ENCODE measurements at regions of chr7 and their contacts with region 1.

Region 1: GRCh38 chr7:100889761-100890634 is 483 bp upstream of the UFSP1 start:
- DNase-seq: peak; percentile 96 to 100 (median 97)
- ATAC-seq: peak; percentile 88
- H3K4me3 ChIP-seq: peak overlapping the region; percentile 54
- H3K27ac ChIP-seq: peak overlapping the region; percentile 77
- H3K4me1 ChIP-seq: peaks cover 33 to 91% of the 10 kb centered on the region in 2 experiments
- H3K27me3 ChIP-seq: no peaks in the 10 kb centered on the region
- CTCF ChIP-seq: no peak
- EP300 ChIP-seq: no peak
- POLR2A ChIP-seq: peak; percentile 89
- RAD21 ChIP-seq: no peak

Region 2: GRCh38 chr7:100874577-100875355 is 15.2 kb before region 1 on chr7 and contains the start of gene SRRT:
- CTCF ChIA-PET with region 1: no interaction called
- POLR2A ChIA-PET with region 1: interaction called, 144 read pairs
- in situ Hi-C with region 1: no loop called
- intact Hi-C with region 1: no loop called
- DNase-seq: peak; percentile 96 to 100 (median 98)
- ATAC-seq: peak; percentile 97
- H3K4me3 ChIP-seq: peak within 1 kb of the TSS; percentile 100
- H3K27ac ChIP-seq: peak within 1 kb of the TSS; percentile 96
- H3K4me1 ChIP-seq: peaks cover 20 to 48% of the 10 kb centered on the region in 2 experiments; a peak in 4 of 5 replicates
- H3K27me3 ChIP-seq: no peaks in the 10 kb centered on the region
- CTCF ChIP-seq: peak; percentile 37 to 41 (median 41); a peak in 4 of 6 replicates
- EP300 ChIP-seq: peak; percentile 56
- POLR2A ChIP-seq: peak; percentile 98
- RAD21 ChIP-seq: 0 out of 4 replicates have a peak, but pooled peaks of 1 of the 2 experiments have one; percentile 3
- polyA plus RNA-seq, gene SRRT: 10.3 to 16.7 TPM

Region 3: GRCh38 chr7:101058355-101058754 is 168.4 kb after region 1 on chr7:
- CTCF ChIA-PET with region 1: interaction called, 28 read pairs
- POLR2A ChIA-PET with region 1: interaction called, 4 read pairs
- in situ Hi-C with region 1: loop called (anchors 5 kb)
- intact Hi-C with region 1: no loop called
- DNase-seq: peak; percentile 80 to 86 (median 84)
- ATAC-seq: peak; percentile 92
- H3K4me3 ChIP-seq: no peak overlapping the region
- H3K27ac ChIP-seq: no peak overlapping the region
- H3K4me1 ChIP-seq: no peaks in the 10 kb centered on the region
- H3K27me3 ChIP-seq: peaks cover 5 to 30% of the 10 kb centered on the region in 2 experiments; a peak in 3 of 5 replicates
- CTCF ChIP-seq: no peak
- EP300 ChIP-seq: no peak
- POLR2A ChIP-seq: no peak
- RAD21 ChIP-seq: no peak

Region 4: GRCh38 chr7:101077303-101078089 is 187.5 kb after region 1 on chr7:
- CTCF ChIA-PET with region 1: interaction called, 7 read pairs
- POLR2A ChIA-PET with region 1: no interaction called
- in situ Hi-C with region 1: no loop called
- intact Hi-C with region 1: loop called (anchors 5 kb)
- DNase-seq: peak; percentile 84 to 88 (median 85)
- ATAC-seq: peak; percentile 98
- H3K4me3 ChIP-seq: no peak overlapping the region
- H3K27ac ChIP-seq: no peak overlapping the region
- H3K4me1 ChIP-seq: peaks cover 0 to 4% of the 10 kb centered on the region in 2 experiments; a peak in 2 of 5 replicates
- H3K27me3 ChIP-seq: peaks cover 3 to 15% of the 10 kb centered on the region in 2 experiments; a peak in 3 of 5 replicates
- CTCF ChIP-seq: peak; percentile 95 to 98 (median 97)
- EP300 ChIP-seq: no peak
- POLR2A ChIP-seq: no peak
- RAD21 ChIP-seq: peak; percentile 75 to 90

Region 5: DNA sequence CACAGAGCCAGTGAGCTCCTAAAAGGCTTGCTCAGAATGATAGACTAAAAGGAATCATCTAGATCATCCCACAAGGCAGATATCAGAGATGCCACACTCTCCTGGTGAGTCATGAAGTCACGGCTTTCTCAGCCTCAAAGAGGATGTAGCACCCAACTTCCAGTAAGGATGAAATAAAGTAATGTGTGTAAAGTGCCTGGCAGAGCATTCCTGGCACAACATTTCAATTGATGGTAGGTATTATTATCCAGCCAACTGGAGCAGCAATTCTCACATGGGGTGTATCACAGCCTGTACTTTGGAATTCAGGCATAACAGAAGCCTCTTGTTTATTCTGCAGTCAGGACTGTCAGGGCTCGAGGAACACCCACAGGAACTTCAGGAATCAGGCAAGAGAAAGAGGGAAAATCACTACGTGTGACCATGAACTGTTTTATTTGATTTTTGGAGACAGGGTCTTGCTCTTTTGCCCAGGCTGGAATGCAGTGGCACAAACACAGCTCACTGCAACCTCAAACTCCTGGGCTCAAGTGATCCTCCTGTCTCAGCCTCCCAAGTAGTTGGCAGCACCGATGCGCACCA is 295.4 kb after region 1 on chr7:
- CTCF ChIA-PET with region 1: no interaction called
- POLR2A ChIA-PET with region 1: no interaction called
- in situ Hi-C with region 1: no loop called
- intact Hi-C with region 1: loop called (anchors 5 kb)
- DNase-seq: peak in 2 of 4 experiments; percentile 27 to 42
- ATAC-seq: no peak
- H3K4me3 ChIP-seq: no peak overlapping the region
- H3K27ac ChIP-seq: no peak overlapping the region
- H3K4me1 ChIP-seq: peaks cover 6 to 7% of the 10 kb centered on the region in 2 experiments; a peak in 3 of 5 replicates
- H3K27me3 ChIP-seq: peaks cover 2 to 6% of the 10 kb centered on the region in 2 experiments; a peak in 3 of 5 replicates
- CTCF ChIP-seq: no peak
- EP300 ChIP-seq: no peak
- POLR2A ChIP-seq: no peak
- RAD21 ChIP-seq: no peak

Measured in K562 (cell line).